ENCODE measurements at regions of chr19 and their contacts with region 1.

Region 1: GRCh38 chr19:47310819-47311218 is 1.2 kb downstream of the C5AR1 start:
- DNase-seq: no peak
- H3K4me3 ChIP-seq: peak overlapping the region in 1 of 3 donors; percentile 33
- H3K27ac ChIP-seq: no peak overlapping the region
- H3K4me1 ChIP-seq: no peaks in the 10 kb centered on the region
- H3K27me3 ChIP-seq: no peaks in the 10 kb centered on the region
- CTCF ChIP-seq: no peak
- POLR2A ChIP-seq: no peak

Region 2: GRCh38 chr19:46542428-46543230 is 768.2 kb before region 1 on chr19:
- intact Hi-C with region 1: no loop called
- DNase-seq: peak; percentile 91 to 92
- H3K4me3 ChIP-seq: no peak overlapping the region
- H3K27ac ChIP-seq: no peak overlapping the region
- H3K4me1 ChIP-seq: no peaks in the 10 kb centered on the region
- H3K27me3 ChIP-seq: no peaks in the 10 kb centered on the region
- CTCF ChIP-seq: peak; percentile 87 to 94 (median 92)
- POLR2A ChIP-seq: no peak

Region 3: DNA sequence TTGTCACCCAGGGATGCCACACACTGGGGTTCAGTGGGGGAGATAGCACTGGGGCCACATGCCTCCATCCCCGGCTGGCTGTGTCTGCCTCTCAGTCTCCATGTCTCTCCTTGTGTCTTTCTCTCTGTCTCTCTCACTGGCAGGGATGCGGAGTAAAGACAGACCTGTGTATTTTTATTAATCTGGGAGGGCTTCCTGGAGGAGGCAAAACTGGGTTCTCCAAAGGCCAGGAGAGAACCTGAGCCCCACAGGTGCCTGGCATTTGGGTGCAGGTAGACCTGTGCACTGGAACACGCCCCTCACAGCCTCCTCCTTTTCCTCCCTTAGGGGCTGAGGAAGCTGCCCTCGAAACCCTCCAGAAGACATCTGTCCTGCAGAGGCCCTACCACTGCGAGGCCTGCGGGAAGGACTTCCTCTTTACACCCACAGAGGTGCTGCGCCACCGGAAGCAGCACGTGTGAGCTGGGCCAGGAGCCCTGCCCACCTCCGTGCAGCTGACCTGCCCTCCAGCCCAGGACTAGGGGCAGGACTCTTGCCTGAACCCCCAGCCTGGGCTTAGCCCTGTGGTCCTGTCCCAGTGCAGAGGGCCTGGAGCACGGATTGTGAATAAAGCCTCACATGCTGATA is 70.9 kb after region 1 on chr19:
- intact Hi-C with region 1: loop called (anchors 2 kb)
- DNase-seq: no peak
- H3K4me3 ChIP-seq: no peak overlapping the region
- H3K27ac ChIP-seq: no peak overlapping the region
- H3K4me1 ChIP-seq: no peaks in the 10 kb centered on the region
- H3K27me3 ChIP-seq: no peaks in the 10 kb centered on the region
- CTCF ChIP-seq: no peak
- POLR2A ChIP-seq: no peak